ENCODE measurements at regions of chr1 and their contacts with region 1.

Region 1: DNA sequence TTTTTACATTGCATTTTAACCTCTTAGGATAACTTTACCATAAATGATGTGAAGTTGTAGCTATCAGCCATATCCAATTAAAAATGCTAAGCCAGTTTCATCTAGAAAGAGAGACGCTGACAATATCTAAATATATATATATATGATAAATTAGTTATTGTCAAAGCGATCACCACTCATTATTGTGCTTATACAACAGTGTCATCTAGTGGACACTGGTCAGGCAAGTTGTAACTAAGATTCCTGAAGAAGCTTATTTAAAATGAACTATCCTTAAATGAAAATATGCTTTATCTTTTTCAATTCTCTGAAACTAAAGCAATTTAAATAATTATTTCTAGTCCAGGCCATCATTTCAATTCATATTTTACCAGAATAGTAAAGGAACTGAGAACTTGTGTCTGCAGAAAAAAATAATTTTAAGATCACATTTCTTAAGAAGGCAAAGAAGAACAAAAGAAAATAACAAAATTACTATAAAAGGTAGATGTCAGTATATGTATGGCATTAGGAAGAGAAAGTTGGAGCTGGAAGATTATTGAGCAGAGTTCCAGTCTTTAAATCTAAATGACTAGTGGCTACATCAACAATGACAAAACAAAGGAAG is 193.3 kb upstream of the SNX7 start:
- DNase-seq: peak in 1 of 2 donors; percentile 67
- ATAC-seq: peak in 1 of 3 donors; percentile 66
- H3K4me3 ChIP-seq: no peak overlapping the region
- H3K4me3 Mint-ChIP-seq: no peak overlapping the region
- H3K27ac ChIP-seq: no peak overlapping the region
- H3K27ac Mint-ChIP-seq: no peak overlapping the region
- H3K4me1 ChIP-seq: no peaks in the 10 kb centered on the region
- H3K4me1 Mint-ChIP-seq: peaks cover 6 to 18% of the 10 kb centered on the region in 2 donors
- H3K27me3 ChIP-seq: no peaks in the 10 kb centered on the region
- H3K27me3 Mint-ChIP-seq: peaks cover 2 to 7% of the 10 kb centered on the region in 2 donors
- CTCF ChIP-seq: peak; percentile 99

Region 2: DNA sequence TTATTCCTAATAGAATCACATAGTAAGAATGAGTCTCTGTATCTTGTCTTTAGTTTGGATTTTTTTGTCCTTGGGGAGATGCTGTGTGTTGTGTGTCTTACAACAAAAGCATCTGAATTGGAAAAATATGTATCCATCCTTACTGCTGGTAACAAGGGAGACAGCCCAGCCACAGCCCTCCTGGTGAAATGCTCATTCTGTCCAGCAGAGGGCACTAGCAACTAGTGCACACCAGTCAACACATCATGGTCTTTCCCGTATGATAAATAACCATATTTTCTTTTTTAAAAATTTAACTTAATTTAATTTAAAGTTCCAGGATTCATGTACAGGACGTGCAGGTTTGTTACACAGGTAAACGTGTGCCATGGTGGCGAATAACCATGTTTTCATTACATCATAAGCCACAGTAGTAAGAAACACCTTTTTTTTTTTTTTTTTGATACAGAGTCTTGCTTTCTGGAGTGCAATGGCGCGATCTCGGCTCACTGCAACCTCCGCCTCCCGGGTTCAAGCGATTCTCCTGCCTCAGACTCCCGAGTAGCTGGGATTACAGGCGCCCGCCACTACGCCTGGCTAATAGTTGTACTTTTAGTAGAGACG is 1501.6 kb before region 1 on chr1:
- intact Hi-C with region 1: loop called (anchors 1 kb)
- DNase-seq: peak; percentile 49 to 81
- ATAC-seq: peak; percentile 70 to 82 (median 82)
- H3K4me3 ChIP-seq: no peak overlapping the region
- H3K4me3 Mint-ChIP-seq: no peak overlapping the region
- H3K27ac ChIP-seq: no peak overlapping the region
- H3K27ac Mint-ChIP-seq: no peak overlapping the region
- H3K4me1 ChIP-seq: no peaks in the 10 kb centered on the region
- H3K4me1 Mint-ChIP-seq: no peaks in the 10 kb centered on the region
- H3K27me3 ChIP-seq: peaks cover 3% of the 10 kb centered on the region
- H3K27me3 Mint-ChIP-seq: peaks cover 13 to 14% of the 10 kb centered on the region in 2 donors
- CTCF ChIP-seq: peak; percentile 86

Region 3: DNA sequence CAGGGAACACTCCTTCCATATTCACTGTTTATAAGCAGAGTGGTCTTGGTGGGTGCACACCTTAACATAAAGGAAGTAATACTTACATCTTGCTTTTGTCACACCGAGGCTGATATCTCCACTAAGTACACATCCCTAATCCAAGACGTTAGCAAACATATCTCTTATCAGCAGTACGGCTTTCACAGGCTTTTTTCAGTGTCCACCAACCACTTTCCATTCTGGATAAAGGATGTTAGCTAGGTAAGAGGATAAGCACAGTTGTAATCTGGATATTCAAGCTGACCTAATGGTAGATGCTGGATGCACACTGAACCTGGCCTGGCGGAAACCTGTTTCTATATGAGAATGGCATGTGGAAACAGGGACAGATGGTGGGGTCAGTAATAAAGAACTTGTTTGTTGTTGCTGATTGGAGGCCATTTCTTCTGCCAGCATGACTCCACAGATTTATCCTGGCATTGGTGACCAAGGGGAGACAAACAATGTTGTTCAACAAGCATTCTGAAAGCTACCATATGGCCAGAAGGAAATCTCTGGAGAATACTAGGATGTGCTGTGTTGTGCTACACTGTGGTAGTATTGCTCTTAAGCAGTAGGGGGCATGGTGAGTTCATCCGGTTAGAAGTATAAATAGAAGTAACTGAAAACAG is 1330.2 kb before region 1 on chr1:
- intact Hi-C with region 1: loop called (anchors 1 kb)
- DNase-seq: peak in 1 of 2 donors; percentile 41
- ATAC-seq: peak; percentile 83 to 96 (median 85)
- H3K4me3 ChIP-seq: no peak overlapping the region
- H3K4me3 Mint-ChIP-seq: peak overlapping the region; percentile 52
- H3K27ac ChIP-seq: no peak overlapping the region
- H3K27ac Mint-ChIP-seq: peak overlapping the region in 1 of 2 donors; percentile 25
- H3K4me1 ChIP-seq: no peaks in the 10 kb centered on the region
- H3K4me1 Mint-ChIP-seq: peaks cover 7 to 12% of the 10 kb centered on the region in 2 donors
- H3K27me3 ChIP-seq: no peaks in the 10 kb centered on the region
- H3K27me3 Mint-ChIP-seq: no peaks in the 10 kb centered on the region
- CTCF ChIP-seq: peak; percentile 45

Region 4: DNA sequence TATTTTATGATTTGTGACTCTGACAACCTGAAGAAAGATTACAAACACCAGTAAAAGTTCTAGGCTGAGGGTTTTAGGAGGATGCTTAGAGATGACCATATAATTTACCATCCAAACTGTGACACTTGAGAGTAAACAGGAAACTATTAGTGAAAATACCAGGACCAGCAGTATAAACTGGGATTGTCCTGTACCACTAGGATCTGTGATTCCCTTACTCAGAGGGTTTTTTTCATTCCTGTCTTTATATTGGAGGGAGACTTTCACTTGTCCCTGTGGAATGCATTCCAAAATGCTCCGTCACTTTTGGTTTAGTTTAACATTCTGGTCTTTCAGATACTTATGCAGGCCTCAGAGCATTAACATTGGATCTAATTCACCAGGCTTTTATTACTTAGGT is 1263.7 kb before region 1 on chr1:
- intact Hi-C with region 1: no loop called
- DNase-seq: no peak
- ATAC-seq: no peak
- H3K4me3 ChIP-seq: no peak overlapping the region
- H3K4me3 Mint-ChIP-seq: no peak overlapping the region
- H3K27ac ChIP-seq: no peak overlapping the region
- H3K27ac Mint-ChIP-seq: no peak overlapping the region
- H3K4me1 ChIP-seq: no peaks in the 10 kb centered on the region
- H3K4me1 Mint-ChIP-seq: peaks cover 0 to 5% of the 10 kb centered on the region in 2 donors
- H3K27me3 ChIP-seq: no peaks in the 10 kb centered on the region
- H3K27me3 Mint-ChIP-seq: no peaks in the 10 kb centered on the region
- CTCF ChIP-seq: no peak

Region 5: DNA sequence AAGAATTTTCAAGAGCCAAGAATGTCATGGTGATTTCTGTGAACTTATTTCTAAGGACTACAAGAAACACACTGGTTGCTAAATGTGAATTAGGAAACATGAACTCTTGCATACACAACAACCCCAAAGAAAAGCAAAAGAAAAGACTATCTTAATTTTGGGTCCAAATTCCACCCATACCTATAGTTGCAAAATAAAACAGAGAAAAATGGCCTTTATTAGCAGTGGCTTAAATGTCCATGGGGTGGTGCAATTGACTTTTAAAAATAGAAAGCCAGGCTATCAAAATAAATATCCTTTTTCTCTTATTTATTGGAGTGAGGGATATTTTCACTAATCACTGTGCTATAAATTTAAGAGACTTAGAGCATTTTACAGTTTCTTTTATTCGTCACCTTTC is 466.4 kb before region 1 on chr1:
- intact Hi-C with region 1: loop called (anchors 5 kb)
- DNase-seq: no peak
- ATAC-seq: no peak
- H3K4me3 ChIP-seq: no peak overlapping the region
- H3K4me3 Mint-ChIP-seq: no peak overlapping the region
- H3K27ac ChIP-seq: no peak overlapping the region
- H3K27ac Mint-ChIP-seq: no peak overlapping the region
- H3K4me1 ChIP-seq: no peaks in the 10 kb centered on the region
- H3K4me1 Mint-ChIP-seq: no peaks in the 10 kb centered on the region
- H3K27me3 ChIP-seq: no peaks in the 10 kb centered on the region
- H3K27me3 Mint-ChIP-seq: peaks cover 5 to 6% of the 10 kb centered on the region in 2 donors
- CTCF ChIP-seq: no peak

Region 6: DNA sequence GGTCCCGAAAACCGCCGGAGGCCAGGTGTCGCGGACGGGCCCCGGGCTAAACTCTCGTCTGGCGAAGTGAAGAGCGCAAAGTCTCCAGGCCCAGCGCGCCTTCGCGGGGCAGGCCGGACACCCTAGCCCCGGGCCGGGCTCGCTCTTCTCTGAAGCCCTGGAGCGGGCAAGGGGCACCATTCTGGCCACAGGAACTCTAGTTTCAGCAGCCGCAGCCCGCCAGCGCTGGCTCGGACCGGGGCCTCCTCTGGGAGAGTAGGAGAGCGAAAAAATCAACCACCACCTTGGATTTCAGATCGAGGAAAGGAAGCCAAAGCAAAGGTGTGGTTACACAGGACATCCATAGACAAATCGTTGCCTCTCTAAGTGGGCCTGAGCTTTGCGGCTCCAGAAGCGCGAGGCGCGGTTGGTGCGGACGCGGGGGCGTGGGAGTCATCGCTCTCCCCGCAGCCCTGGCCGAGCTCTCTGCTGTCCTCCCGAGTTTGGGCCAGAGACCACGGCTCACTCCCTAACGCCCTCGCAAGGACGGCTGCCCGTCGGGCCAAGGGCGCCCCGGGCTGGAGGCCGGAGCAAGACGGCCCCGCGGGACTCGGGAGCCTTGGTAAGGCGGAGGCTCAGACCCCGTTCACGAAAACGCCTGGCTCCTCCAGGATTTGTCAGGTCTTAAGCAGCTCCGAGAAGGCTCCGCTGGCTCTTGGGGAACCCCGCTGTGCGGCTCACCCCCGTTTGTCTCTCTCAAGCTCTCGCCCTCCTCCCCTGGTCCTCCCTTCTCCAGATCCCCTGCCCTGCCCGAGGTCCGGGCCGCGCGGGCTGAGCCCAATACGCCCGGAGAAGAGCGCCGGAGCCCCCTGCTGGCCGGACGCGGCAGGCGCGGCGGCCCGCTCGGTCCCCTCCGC is 414.5 kb before region 1 on chr1:
- intact Hi-C with region 1: loop called (anchors 2 kb)
- DNase-seq: peak; percentile 60 to 72
- ATAC-seq: peak; percentile 93 to 95 (median 95)
- H3K4me3 ChIP-seq: peak overlapping the region; percentile 36
- H3K4me3 Mint-ChIP-seq: peak overlapping the region; percentile 84
- H3K27ac ChIP-seq: no peak overlapping the region
- H3K27ac Mint-ChIP-seq: peak overlapping the region; percentile 10 to 12
- H3K4me1 ChIP-seq: peaks cover 15% of the 10 kb centered on the region
- H3K4me1 Mint-ChIP-seq: peaks cover 14 to 29% of the 10 kb centered on the region in 2 donors
- H3K27me3 ChIP-seq: peaks cover 48% of the 10 kb centered on the region
- H3K27me3 Mint-ChIP-seq: peaks cover 56 to 82% of the 10 kb centered on the region in 2 donors
- CTCF ChIP-seq: peak; percentile 81

Region 7: DNA sequence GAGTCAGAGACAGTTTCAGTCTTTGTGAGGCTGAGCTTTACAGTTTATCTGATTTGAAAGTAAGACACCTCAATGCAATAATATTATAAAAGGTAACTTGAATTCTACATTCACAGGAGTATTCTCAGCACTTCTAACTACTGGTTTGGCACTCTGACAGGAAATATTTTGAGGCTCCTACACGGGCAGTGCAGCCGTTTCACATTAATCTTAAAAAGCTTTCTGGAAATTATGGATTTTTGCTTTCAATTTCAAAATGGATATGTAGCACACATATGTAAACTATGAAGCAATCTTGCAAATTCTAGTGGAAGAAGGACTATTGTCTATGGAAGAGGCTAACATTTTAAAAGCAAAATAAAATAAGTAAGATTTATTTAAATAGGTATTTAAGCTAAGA is 69.6 kb before region 1 on chr1:
- intact Hi-C with region 1: no loop called
- DNase-seq: no peak
- ATAC-seq: no peak
- H3K4me3 ChIP-seq: no peak overlapping the region
- H3K4me3 Mint-ChIP-seq: peak overlapping the region; percentile 41
- H3K27ac ChIP-seq: no peak overlapping the region
- H3K27ac Mint-ChIP-seq: peak overlapping the region in 1 of 2 donors; percentile 39
- H3K4me1 ChIP-seq: no peaks in the 10 kb centered on the region
- H3K4me1 Mint-ChIP-seq: peaks cover 25 to 32% of the 10 kb centered on the region in 2 donors
- H3K27me3 ChIP-seq: no peaks in the 10 kb centered on the region
- H3K27me3 Mint-ChIP-seq: no peaks in the 10 kb centered on the region
- CTCF ChIP-seq: no peak

Region 8: DNA sequence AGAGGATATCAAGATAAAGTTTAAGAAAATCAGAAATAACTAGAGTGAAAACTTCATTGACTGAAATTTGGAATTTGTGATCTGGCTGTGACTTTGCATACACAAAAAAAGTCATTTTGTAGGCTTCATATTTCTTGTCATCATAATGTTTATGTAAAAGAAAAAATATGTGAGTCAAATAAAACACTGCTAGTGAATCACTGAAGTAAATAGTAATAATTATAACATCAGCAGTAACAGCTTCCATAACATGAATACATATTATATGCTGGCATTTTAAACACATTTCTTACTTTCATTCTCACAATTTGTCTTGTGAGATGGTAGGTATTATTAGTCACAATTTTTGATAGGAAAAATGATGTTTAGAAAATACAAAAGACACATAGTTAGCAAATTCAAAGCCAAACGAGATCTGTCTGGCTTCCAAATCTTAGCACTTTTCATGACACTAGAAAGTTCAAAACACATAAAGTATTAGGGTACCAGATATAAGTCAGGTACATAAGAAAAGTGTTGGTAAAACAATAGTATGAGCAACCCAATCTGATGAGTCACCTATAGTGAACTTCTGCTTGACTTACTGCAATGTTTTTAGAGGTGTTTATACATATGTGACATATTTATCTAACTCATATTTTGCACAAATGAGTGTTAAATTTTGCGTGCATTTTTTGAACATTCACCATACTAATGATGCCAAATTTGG is 47.7 kb before region 1 on chr1:
- intact Hi-C with region 1: no loop called
- DNase-seq: no peak
- ATAC-seq: no peak
- H3K4me3 ChIP-seq: no peak overlapping the region
- H3K4me3 Mint-ChIP-seq: no peak overlapping the region
- H3K27ac ChIP-seq: no peak overlapping the region
- H3K27ac Mint-ChIP-seq: no peak overlapping the region
- H3K4me1 ChIP-seq: no peaks in the 10 kb centered on the region
- H3K4me1 Mint-ChIP-seq: no peaks in the 10 kb centered on the region
- H3K27me3 ChIP-seq: no peaks in the 10 kb centered on the region
- H3K27me3 Mint-ChIP-seq: no peaks in the 10 kb centered on the region
- CTCF ChIP-seq: no peak